Activated CD4-positive, alpha-beta T cell treated with anti-CD3 and anti-CD28 coated beads for 36 hours (primary cell): ENCODE measurements at regions of chr3 and their contacts with region 1.

Region 1: DNA sequence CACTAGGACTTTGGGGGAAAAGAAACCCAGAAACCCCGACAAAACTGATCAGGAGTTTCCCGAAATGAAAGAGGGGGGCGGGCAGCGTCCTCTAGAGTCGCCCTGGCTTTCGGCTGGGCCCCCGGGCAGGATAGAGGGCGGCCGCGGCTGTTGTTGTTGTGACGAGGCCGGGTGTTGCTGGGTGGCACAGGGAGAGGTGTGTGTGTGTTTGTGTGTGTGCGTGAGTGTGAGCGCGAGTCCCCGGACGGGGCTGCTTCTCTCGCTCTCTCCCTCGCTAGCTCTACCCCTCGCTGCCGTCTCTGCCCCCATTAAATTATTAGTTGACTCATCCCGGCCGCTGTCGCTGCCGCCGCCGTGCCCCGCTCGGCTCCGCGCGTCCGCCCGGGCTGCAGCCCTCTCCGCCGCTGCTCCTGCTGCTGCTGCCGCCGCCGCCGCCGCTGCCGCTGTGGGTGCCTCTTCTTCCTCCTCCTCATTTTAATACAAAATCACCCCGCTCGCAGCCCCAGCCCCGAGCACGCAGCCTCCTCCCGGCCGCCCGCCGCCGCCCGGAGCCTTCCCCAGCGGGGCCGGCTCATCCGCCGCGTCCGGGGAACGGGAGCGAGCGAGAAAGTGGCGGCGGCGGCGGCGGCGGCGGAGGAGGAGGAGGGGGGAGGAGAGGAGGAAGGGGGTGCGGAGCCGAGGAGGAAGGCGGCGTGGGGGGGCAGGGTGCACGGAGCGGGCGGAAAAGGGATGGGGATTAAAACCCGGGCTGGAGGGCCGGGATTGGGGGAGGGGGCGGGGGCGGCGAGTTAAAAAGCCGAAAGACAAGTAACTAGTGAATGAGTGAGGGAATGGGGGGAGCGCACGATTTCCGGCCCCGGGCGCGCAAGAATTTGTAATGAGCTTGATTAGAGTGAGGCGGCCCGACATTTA is at the start of gene SATB1:
- DNase-seq: peak; percentile 84
- ATAC-seq: peak; percentile 15
- H3K4me3 Mint-ChIP-seq: peak within 1 kb of the TSS; percentile 85
- H3K27ac Mint-ChIP-seq: peak within 1 kb of the TSS; percentile 97
- H3K4me1 Mint-ChIP-seq: peaks cover 71% of the 10 kb centered on the region
- H3K27me3 Mint-ChIP-seq: no peaks in the 10 kb centered on the region
- total RNA-seq, gene SATB1: 471 to 590 TPM

Region 2: GRCh38 chr3:18258492-18258891 is 166.5 kb before region 1 on chr3:
- CTCF ChIA-PET with region 1: no interaction called
- POLR2A ChIA-PET with region 1: no interaction called
- intact Hi-C with region 1: no loop called
- DNase-seq: peak; percentile 7
- ATAC-seq: no peak
- H3K4me3 Mint-ChIP-seq: no peak overlapping the region
- H3K27ac Mint-ChIP-seq: no peak overlapping the region
- H3K4me1 Mint-ChIP-seq: no peaks in the 10 kb centered on the region
- H3K27me3 Mint-ChIP-seq: peaks cover 3% of the 10 kb centered on the region

Region 3: GRCh38 chr3:18411541-18411940 is 13.4 kb before region 1 on chr3:
- CTCF ChIA-PET with region 1: interaction called, 9 read pairs
- POLR2A ChIA-PET with region 1: interaction called, 15 read pairs
- intact Hi-C with region 1: loop called in 1 of 2 experiments (anchors 2 kb)
- DNase-seq: no peak
- ATAC-seq: no peak
- H3K4me3 Mint-ChIP-seq: peak overlapping the region; percentile 57
- H3K27ac Mint-ChIP-seq: peak overlapping the region; percentile 90
- H3K4me1 Mint-ChIP-seq: peaks cover 91% of the 10 kb centered on the region
- H3K27me3 Mint-ChIP-seq: no peaks in the 10 kb centered on the region

Region 4: GRCh38 chr3:18438586-18438985 is 13.6 kb after region 1 on chr3:
- CTCF ChIA-PET with region 1: interaction called, 8 read pairs
- POLR2A ChIA-PET with region 1: interaction called, 15 read pairs
- intact Hi-C with region 1: loop called (anchors 1 kb)
- DNase-seq: peak; percentile 84
- ATAC-seq: peak; percentile 81
- H3K4me3 Mint-ChIP-seq: peak overlapping the region; percentile 79
- H3K27ac Mint-ChIP-seq: peak overlapping the region; percentile 96
- H3K4me1 Mint-ChIP-seq: peaks cover 14% of the 10 kb centered on the region
- H3K27me3 Mint-ChIP-seq: no peaks in the 10 kb centered on the region

Region 5: DNA sequence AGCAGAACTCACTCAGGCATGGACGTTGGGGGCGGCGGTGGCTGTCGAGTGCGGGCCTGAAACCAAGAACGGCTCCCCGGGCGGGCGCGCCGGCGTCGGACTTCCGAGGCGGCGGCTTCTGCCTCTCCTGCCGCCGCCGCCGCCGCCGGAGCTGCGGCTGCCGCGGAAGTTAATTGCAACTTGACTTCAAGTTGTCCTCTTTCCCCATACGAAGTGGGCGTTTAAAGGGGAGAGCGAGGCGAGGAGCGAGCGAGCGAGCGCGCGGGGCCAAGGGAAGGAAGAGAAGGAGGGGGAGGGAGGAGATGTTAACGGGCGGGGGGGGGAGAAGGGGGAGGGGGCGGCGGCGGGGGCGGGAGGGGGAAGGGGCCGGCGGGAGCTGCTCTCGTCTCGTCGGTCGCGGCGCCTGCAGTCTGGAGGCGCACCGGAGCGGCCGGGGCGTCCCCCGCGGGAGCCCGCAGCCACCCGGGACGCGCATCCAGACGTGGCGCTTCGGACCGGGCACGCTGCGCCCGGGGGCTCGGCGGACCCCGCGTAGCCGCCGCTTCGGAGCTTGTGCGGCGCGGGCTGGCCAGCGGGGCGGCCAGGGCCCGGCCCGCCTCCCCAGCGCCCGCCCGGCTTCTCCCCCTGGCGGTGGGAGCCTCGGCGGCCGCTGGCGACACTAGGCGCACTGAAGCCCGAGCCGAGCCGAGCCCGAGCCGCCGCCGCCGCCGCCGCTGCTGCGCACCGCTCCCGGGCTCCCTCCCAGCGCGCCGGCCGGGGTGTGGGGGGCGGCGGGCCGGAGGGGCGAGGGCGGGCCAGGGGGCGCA is 19.8 kb after region 1 on chr3:
- CTCF ChIA-PET with region 1: interaction called, 9 read pairs
- POLR2A ChIA-PET with region 1: interaction called, 4 read pairs
- intact Hi-C with region 1: loop called (anchors 1 kb)
- DNase-seq: peak; percentile 89
- ATAC-seq: peak; percentile 66
- H3K4me3 Mint-ChIP-seq: peak overlapping the region; percentile 96
- H3K27ac Mint-ChIP-seq: peak overlapping the region; percentile 91
- H3K4me1 Mint-ChIP-seq: peaks cover 25% of the 10 kb centered on the region
- H3K27me3 Mint-ChIP-seq: no peaks in the 10 kb centered on the region

Region 6: DNA sequence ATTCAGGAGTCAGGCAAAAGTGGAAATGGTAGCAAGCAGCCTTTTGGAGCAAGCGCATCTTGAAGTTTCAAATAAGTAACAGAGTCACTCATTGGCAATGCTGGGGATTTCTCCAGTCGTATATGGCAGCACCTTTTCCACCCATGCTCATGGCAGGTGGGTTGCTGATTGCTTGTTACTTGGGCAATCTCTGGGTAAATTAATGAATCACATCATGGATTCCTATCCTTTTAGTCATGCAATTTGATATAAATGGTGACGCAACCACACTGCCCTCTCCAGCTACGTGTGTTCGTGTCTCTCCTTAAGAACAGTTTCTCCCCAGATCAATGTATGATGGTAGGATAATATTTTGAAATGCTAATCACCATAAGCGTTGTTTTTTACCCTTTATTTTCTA is 383.4 kb after region 1 on chr3:
- CTCF ChIA-PET with region 1: no interaction called
- POLR2A ChIA-PET with region 1: interaction called, 10 read pairs
- intact Hi-C with region 1: no loop called
- DNase-seq: peak; percentile 15
- ATAC-seq: no peak
- H3K4me3 Mint-ChIP-seq: no peak overlapping the region
- H3K27ac Mint-ChIP-seq: peak overlapping the region; percentile 16
- H3K4me1 Mint-ChIP-seq: peaks cover 40% of the 10 kb centered on the region
- H3K27me3 Mint-ChIP-seq: no peaks in the 10 kb centered on the region